Dorsolateral prefrontal cortex (tissue), 120 donors: ENCODE measurements at regions of chr2 and their contacts with region 1.

Region 1: GRCh38 chr2:74002487-74003391 is 18.0 kb downstream of the TET3 start:
- DNase-seq: peak; percentile 73 to 95 (median 86)
- H3K4me3 ChIP-seq: peak overlapping the region; percentile 60 to 96 (median 84)
- H3K27ac ChIP-seq: peak overlapping the region in 58 of 59 donors; percentile 66 to 93 (median 87)
- H3K27me3 ChIP-seq: no peaks in the 10 kb centered on the region
- CTCF ChIP-seq: peak in 25 of 56 donors; percentile 3 to 63 (median 31)

Region 2: DNA sequence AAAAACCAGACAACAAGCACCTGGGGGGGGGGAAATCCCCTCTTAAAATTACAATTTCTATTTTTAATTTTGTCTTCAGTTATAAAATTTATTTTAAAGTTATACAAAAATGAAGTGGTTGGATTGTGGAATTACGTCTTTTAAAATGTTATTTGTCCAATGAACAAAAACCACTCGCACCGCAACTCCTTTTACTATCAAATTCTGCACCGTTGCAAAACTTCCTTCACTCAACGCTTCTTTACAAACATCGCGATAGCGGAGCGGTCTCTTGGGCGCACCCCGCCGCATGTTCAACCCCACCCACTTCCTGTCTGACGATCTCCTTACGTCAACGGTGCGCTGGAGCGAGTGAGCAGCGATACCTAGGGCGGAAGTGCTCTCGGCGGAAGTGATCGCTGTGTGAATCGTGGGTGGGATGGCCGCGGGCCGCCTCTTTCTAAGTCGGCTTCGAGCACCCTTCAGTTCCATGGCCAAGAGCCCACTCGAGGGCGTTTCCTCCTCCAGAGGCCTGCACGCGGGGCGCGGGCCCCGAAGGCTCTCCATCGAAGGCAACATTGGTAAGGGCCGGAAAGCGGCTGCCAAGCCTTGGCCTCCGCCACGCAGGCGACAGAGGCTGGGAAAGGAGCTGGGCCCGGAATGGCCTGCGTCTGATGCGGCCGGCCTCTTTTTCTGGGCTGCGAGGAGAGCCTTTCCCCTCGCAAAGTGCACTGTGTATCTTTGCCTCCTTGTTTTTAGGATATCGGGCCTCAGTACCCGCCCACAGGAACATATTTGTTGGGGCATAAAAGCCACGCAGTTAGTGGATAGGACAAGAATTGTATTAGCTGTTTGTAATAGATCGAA is 76.0 kb before region 1 on chr2 and contains the start of gene DGUOK:
- intact Hi-C with region 1: loop called (anchors 5 kb)
- DNase-seq: peak; percentile 92 to 99 (median 96)
- H3K4me3 ChIP-seq: peak within 1 kb of the TSS; percentile 65 to 98 (median 86)
- H3K27ac ChIP-seq: peak within 1 kb of the TSS; percentile 59 to 99 (median 90)
- H3K27me3 ChIP-seq: peaks cover 0 to 9% (median 0%) of the 10 kb centered on the region in 45 donors
- CTCF ChIP-seq: peak in 29 of 56 donors; percentile 2 to 56 (median 25)
- total RNA-seq, gene DGUOK: 29.0 to 56.8 (median 44.9) TPM

Region 3: GRCh38 chr2:74052732-74053597 is 50.2 kb after region 1 on chr2:
- intact Hi-C with region 1: loop called in 1 of 2 experiments (anchors 5 kb)
- DNase-seq: no peak
- H3K4me3 ChIP-seq: peak overlapping the region in 15 of 59 donors; percentile 2 to 39 (median 16)
- H3K27ac ChIP-seq: peak overlapping the region in 57 of 59 donors; percentile 21 to 95 (median 78)
- H3K27me3 ChIP-seq: no peaks in the 10 kb centered on the region
- CTCF ChIP-seq: no peak

Region 4: GRCh38 chr2:74104839-74105238 is 102.1 kb after region 1 on chr2:
- intact Hi-C with region 1: loop called in 1 of 2 experiments (anchors 5 kb)
- DNase-seq: no peak
- H3K4me3 ChIP-seq: no peak overlapping the region
- H3K27ac ChIP-seq: peak overlapping the region in 1 of 59 donors; percentile 14
- H3K27me3 ChIP-seq: no peaks in the 10 kb centered on the region
- CTCF ChIP-seq: peak in 49 of 56 donors; percentile 8 to 64 (median 38)